ENCODE measurements at regions of chr14 and their contacts with region 1.

Region 1: DNA sequence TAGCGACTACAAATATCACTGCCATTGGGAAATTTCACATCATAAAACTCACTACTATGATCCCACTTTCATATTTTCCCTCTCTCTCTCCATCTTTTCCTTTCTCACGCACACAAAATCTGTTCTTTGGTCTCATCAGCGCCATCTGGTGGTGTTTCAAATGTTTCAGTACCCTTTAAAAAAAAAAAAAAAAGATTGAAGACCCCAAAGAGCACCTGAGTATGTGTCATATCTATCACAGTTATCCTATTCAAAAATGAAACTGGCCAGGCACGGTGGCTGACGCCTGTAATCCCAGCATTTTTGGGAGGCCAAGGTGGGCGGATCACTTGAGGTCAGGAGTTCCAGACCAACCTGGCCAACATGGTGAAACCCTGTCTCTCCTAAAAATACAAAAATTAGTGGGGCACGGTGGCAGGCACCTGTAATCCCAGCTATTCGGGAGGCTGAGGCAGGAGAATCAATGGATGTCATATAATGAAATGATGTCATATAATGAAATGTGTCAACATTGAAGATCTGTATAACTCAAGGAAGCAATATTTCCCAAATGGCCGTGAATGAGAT is 72.4 kb downstream of the TTC9 start:
- DNase-seq: no peak
- H3K4me3 ChIP-seq: peak overlapping the region in 1 of 2 donors; percentile 18
- H3K27ac ChIP-seq: peak overlapping the region in 1 of 2 donors; percentile 64
- H3K4me1 ChIP-seq: peaks cover 0 to 8% of the 10 kb centered on the region in 2 donors
- H3K27me3 ChIP-seq: no peaks in the 10 kb centered on the region
- CTCF ChIP-seq: peak; percentile 43 to 73 (median 67)

Region 2: GRCh38 chr14:69818757-69819191 is 895.4 kb before region 1 on chr14:
- intact Hi-C with region 1: loop called (anchors 5 kb)
- DNase-seq: peak in 1 of 2 donors; percentile 67
- H3K4me3 ChIP-seq: no peak overlapping the region
- H3K27ac ChIP-seq: no peak overlapping the region
- H3K4me1 ChIP-seq: no peaks in the 10 kb centered on the region
- H3K27me3 ChIP-seq: no peaks in the 10 kb centered on the region
- CTCF ChIP-seq: peak; percentile 67 to 91 (median 72)

Region 3: DNA sequence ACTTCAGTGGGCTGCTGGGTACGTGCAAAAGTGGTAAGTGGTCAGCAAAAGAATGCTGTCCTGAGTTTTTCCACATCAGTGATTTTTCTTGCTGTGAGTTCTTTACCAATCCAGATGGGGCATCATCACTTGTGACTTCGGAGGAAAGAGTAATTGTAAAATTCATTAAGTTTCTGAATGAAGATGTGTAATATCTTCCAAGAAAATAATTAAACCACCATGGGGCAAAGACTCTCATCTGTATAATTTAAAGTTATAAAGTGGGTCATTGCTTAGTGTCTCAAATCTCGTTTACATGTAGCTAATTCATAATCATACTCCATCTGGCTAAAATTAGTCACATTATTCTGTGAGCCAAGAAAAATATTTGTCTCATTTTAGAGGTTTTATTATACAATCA is 102.9 kb before region 1 on chr14:
- intact Hi-C with region 1: no loop called
- DNase-seq: no peak
- H3K4me3 ChIP-seq: no peak overlapping the region
- H3K27ac ChIP-seq: no peak overlapping the region
- H3K4me1 ChIP-seq: no peaks in the 10 kb centered on the region
- H3K27me3 ChIP-seq: no peaks in the 10 kb centered on the region
- CTCF ChIP-seq: no peak

Region 4: GRCh38 chr14:70622111-70622712 is 91.9 kb before region 1 on chr14:
- intact Hi-C with region 1: loop called (anchors 2 kb)
- DNase-seq: no peak
- H3K4me3 ChIP-seq: no peak overlapping the region
- H3K27ac ChIP-seq: no peak overlapping the region
- H3K4me1 ChIP-seq: no peaks in the 10 kb centered on the region
- H3K27me3 ChIP-seq: no peaks in the 10 kb centered on the region
- CTCF ChIP-seq: peak; percentile 29 to 54 (median 34)

Region 5: DNA sequence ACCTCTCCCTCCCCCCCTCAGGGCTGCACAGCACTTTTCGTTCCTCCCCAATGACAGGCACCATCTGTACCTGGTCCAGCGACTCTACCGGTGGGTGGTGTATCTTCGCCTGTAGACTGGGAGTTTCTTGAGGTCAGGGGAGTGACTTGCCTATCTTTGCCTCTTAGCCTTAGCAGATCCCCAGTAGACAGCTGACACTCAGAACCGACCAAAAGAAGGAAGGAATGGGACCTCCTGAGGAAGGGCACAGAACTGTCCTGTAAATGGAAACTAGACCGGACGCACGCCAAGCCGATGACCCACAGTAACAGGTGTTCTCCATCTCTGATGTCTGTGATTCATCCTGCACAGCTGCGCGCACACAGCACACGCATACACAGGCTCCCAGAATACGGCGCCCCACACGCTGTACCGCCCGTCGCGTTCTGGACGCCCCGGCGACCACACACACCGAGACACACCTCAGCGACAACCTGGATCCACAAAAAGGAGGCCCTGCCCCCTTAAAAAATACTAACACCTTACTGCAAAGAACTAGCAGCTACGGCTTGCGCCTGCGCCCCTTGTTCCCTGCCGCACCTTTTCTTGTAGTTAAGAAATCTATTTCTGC is 73.1 kb before region 1 on chr14:
- intact Hi-C with region 1: loop called (anchors 5 kb)
- DNase-seq: no peak
- H3K4me3 ChIP-seq: peak overlapping the region; percentile 63 to 88
- H3K27ac ChIP-seq: no peak overlapping the region
- H3K4me1 ChIP-seq: peaks cover 0 to 4% of the 10 kb centered on the region in 2 donors
- H3K27me3 ChIP-seq: peaks cover 7% of the 10 kb centered on the region
- CTCF ChIP-seq: no peak

Region 6: DNA sequence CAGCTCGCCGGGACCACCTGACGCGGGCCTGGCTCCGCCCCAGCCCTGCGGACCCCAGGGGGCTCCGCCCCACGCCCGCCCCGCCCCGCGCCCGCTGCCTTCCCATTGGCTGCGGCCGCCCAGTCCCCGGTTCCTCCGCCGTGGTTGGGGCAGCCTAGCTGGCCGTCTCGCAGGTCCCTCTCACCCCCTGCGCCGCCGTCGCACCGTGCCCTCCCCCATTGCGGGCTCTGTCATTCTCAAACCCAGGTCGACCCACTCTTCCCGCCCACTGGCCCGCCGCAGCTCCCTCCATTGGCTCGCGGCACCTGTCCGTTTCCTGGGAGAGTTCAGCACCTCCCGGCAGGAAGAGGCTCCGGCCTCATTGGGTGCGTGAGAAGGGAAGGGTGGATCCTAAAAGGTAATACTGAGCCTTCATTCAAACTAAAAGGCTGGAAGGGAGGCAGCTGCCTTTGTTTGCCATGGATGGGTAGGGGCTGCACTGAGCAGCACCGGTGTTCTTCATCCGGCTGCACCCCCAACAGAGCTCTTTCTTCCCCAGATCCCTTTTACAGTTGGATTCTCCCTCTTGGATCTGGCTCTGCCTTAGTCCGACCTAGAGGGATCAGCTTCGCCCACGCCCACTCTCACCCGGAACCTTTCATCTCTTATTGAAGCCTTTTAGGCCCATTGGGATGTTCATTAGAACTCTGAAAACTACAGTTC is 95.6 kb after region 1 on chr14:
- intact Hi-C with region 1: loop called (anchors 5 kb)
- DNase-seq: peak; percentile 33 to 89
- H3K4me3 ChIP-seq: peak overlapping the region; percentile 75 to 92
- H3K27ac ChIP-seq: no peak overlapping the region
- H3K4me1 ChIP-seq: peaks cover 3 to 7% of the 10 kb centered on the region in 2 donors
- H3K27me3 ChIP-seq: no peaks in the 10 kb centered on the region
- CTCF ChIP-seq: no peak